ENCODE measurements at regions of chr4 and their contacts with region 1.

Region 1: GRCh38 chr4:186297013-186297645 is 31.1 kb downstream of the F11 start:
- DNase-seq: no peak
- ATAC-seq: no peak
- H3K4me3 ChIP-seq: no peak overlapping the region
- H3K27ac ChIP-seq: no peak overlapping the region
- H3K4me1 ChIP-seq: no peaks in the 10 kb centered on the region
- H3K27me3 ChIP-seq: peaks cover 0 to 31% (median 3%) of the 10 kb centered on the region in 3 donors
- CTCF ChIP-seq: peak; percentile 58

Region 2: DNA sequence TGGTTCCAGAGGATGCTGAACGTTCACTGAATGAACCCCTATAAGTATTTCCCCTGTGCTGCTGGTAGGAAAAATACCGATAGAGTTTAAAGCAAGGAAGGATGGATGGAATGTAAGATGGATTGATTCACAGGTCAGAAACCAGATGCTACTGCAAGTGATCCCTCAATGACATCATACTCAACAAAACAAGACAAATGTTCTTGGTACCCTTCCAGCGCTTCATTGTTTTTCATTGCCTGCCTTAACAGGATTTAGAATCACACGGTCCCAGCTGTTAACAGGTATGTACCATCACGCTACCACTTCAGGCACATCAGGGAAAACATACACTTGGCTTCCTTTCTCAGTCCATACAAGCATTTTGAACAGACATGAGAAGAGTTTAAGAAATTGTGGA is 346.2 kb before region 1 on chr4:
- intact Hi-C with region 1: no loop called
- DNase-seq: no peak
- ATAC-seq: no peak
- H3K4me3 ChIP-seq: no peak overlapping the region
- H3K27ac ChIP-seq: no peak overlapping the region
- H3K4me1 ChIP-seq: no peaks in the 10 kb centered on the region
- H3K27me3 ChIP-seq: no peaks in the 10 kb centered on the region
- CTCF ChIP-seq: no peak

Region 3: GRCh38 chr4:186587416-186588018 is 290.4 kb after region 1 on chr4:
- intact Hi-C with region 1: loop called (anchors 1 to 5 kb)
- DNase-seq: peak; percentile 59 to 75
- ATAC-seq: peak in 1 of 4 donors; percentile 45
- H3K4me3 ChIP-seq: no peak overlapping the region
- H3K27ac ChIP-seq: no peak overlapping the region
- H3K4me1 ChIP-seq: no peaks in the 10 kb centered on the region
- H3K27me3 ChIP-seq: no peaks in the 10 kb centered on the region
- CTCF ChIP-seq: peak; percentile 87

Region 4: DNA sequence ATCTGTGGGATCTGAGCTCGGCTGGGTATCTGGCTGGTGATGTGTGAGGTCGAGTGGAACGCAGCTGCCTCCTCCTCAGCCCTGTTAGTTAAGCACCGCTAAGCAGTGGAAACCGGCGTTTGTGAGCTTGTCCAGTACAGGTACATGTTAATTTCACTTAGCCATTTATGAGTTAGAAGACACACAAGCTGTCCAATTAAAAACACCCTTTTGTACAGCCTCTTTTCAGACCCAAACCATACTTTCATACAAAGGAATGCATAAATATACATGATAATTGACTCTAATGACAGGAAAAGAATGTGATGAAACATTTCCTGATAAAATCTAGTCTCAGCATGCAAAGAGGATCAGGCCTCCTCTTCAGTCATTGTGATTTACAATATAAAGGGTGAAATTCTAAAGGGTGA is 590.2 kb after region 1 on chr4:
- intact Hi-C with region 1: no loop called
- DNase-seq: no peak
- ATAC-seq: no peak
- H3K4me3 ChIP-seq: no peak overlapping the region
- H3K27ac ChIP-seq: no peak overlapping the region
- H3K4me1 ChIP-seq: no peaks in the 10 kb centered on the region
- H3K27me3 ChIP-seq: no peaks in the 10 kb centered on the region
- CTCF ChIP-seq: no peak

Measured in psoas muscle (tissue), 8 donors.